H1 (cell line): ENCODE measurements at regions of chr6 and their contacts with region 1.

Region 1: DNA sequence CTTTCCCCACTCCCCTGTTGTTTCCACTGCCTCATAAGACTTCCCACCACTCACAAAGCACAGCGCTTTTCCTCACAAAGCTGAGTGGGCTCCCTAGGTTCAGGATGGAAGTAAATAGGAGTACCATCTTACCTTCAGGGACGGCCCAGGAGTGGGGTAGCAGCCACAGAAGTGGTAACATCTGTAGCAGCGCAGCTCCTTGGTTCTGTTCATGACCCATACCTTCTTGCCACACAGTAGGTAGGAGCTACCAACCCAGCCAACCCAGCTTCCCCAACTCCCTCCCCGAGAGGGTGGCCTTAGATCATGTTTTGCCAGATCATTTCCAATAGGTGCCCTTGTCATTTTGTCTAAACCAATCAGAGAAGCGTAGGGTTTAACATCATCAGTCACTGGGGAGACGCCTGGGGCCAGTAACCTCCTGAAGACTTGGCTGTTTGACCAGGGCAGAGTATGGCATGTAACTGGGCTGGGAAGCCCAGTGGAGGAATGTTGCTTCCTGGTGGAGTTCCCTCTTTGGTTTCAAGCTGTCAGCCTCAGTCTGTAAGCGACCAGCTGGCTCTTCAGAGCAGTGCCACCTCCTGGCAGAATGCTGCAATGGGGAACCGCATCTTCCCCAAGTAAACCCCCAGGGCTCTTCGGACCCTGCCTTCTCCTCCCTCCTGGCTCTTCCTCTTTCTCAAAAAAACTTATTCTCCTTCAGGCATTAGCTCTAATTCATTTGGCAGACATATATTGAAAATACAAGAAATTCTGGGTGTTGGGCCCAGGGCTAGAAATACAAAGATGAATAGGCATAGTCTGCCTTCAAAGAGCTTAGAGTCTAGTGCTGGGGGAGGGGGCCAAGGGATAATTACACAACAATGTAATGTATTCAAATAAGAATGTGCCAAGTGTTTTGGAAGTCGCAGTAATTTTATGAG is at the start of gene HLA-DMA:
- DNase-seq: peak; percentile 82 to 88
- H3K4me3 ChIP-seq: no peak within 1 kb of the TSS
- H3K27ac ChIP-seq: no peak within 1 kb of the TSS
- H3K4me1 ChIP-seq: peaks cover 0 to 13% (median 3%) of the 10 kb centered on the region in 4 experiments; a peak in 5 of 7 replicates
- H3K27me3 ChIP-seq: no peaks in the 10 kb centered on the region; a peak in 1 of 7 replicates
- CTCF ChIP-seq: peak; percentile 81 to 93 (median 82)
- EP300 ChIP-seq: no peak
- POLR2A ChIP-seq: no peak
- RAD21 ChIP-seq: peak; percentile 38 to 59
- total RNA-seq, gene HLA-DMA: 13.3 and 15.1 TPM in 2 replicates

Region 2: GRCh38 chr6:32685603-32686002 is 267.5 kb before region 1 on chr6:
- CTCF ChIA-PET with region 1: no interaction called
- POLR2A ChIA-PET with region 1: no interaction called
- DNase-seq: no peak
- H3K4me3 ChIP-seq: no peak overlapping the region
- H3K27ac ChIP-seq: no peak overlapping the region
- H3K4me1 ChIP-seq: no peaks in the 10 kb centered on the region; a peak in 1 of 7 replicates
- H3K27me3 ChIP-seq: no peaks in the 10 kb centered on the region
- CTCF ChIP-seq: no peak
- EP300 ChIP-seq: no peak
- POLR2A ChIP-seq: no peak
- RAD21 ChIP-seq: no peak

Region 3: GRCh38 chr6:32843979-32844838 is 108.9 kb before region 1 on chr6 and contains the start of gene PSMB8:
- CTCF ChIA-PET with region 1: interaction called, 28 read pairs
- POLR2A ChIA-PET with region 1: no interaction called
- DNase-seq: peak; percentile 88 to 95
- H3K4me3 ChIP-seq: peak within 1 kb of the TSS; percentile 59 to 93 (median 88)
- H3K27ac ChIP-seq: no peak within 1 kb of the TSS
- H3K4me1 ChIP-seq: peaks cover 0 to 3% (median 0%) of the 10 kb centered on the region in 4 experiments; a peak in 2 of 7 replicates
- H3K27me3 ChIP-seq: peaks cover 0 to 11% (median 10%) of the 10 kb centered on the region in 4 experiments; a peak in 4 of 7 replicates
- CTCF ChIP-seq: peak in 1 of 3 experiments; percentile 8; a peak in 1 of 4 replicates
- EP300 ChIP-seq: no peak
- POLR2A ChIP-seq: peak in 1 of 2 experiments; percentile 75; a peak in 2 of 3 replicates
- RAD21 ChIP-seq: no peak
- total RNA-seq, gene PSMB8: 18.4 and 22.0 TPM in 2 replicates

Region 4: DNA sequence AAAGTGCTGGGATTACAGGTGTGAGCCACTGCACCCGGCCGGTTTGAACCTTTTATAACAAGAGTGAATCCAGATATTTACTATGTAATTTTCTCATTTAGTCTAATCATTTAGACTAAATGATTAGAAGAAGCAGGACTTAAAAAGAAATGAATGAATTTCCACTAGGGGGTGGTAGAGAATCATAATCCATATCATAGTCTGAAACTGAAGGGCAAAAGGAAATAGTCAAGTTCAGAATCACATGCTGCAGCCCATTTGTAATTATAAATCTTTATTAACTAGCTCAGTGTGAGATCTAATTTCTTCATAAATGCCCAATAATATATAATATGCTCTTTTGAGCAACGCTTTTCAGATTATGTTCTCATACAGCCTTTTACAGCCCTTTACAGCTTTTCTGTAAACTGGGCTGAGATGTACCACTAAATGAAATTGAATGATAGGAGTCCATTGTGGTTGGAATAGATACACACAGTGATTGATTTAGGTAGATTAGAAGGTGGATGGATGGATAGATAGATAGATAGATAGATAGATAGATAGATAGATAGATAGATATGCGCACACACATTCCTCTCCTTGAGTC is 67.3 kb before region 1 on chr6:
- CTCF ChIA-PET with region 1: interaction called, 15 read pairs
- POLR2A ChIA-PET with region 1: interaction called, 4 read pairs
- DNase-seq: no peak
- H3K4me3 ChIP-seq: no peak overlapping the region
- H3K27ac ChIP-seq: no peak overlapping the region
- H3K4me1 ChIP-seq: no peaks in the 10 kb centered on the region
- H3K27me3 ChIP-seq: no peaks in the 10 kb centered on the region
- CTCF ChIP-seq: peak in 2 of 3 experiments; percentile 25 to 38; a peak in 2 of 4 replicates
- EP300 ChIP-seq: no peak
- POLR2A ChIP-seq: no peak
- RAD21 ChIP-seq: peak; percentile 63 to 67

Region 5: GRCh38 chr6:32894080-32895005 is 58.7 kb before region 1 on chr6:
- CTCF ChIA-PET with region 1: interaction called, 16 read pairs
- POLR2A ChIA-PET with region 1: interaction called, 10 read pairs
- DNase-seq: peak; percentile 84 to 99
- H3K4me3 ChIP-seq: peak overlapping the region; percentile 74 to 92 (median 84)
- H3K27ac ChIP-seq: peak overlapping the region; percentile 39; the same call in 1 of the 2 replicates
- H3K4me1 ChIP-seq: peaks cover 0 to 4% (median 1%) of the 10 kb centered on the region in 4 experiments; a peak in 2 of 7 replicates
- H3K27me3 ChIP-seq: no peaks in the 10 kb centered on the region; a peak in 1 of 7 replicates
- CTCF ChIP-seq: no peak
- EP300 ChIP-seq: no peak
- POLR2A ChIP-seq: peak in 1 of 2 experiments; percentile 69; a peak in 2 of 3 replicates
- RAD21 ChIP-seq: no peak

Region 6: DNA sequence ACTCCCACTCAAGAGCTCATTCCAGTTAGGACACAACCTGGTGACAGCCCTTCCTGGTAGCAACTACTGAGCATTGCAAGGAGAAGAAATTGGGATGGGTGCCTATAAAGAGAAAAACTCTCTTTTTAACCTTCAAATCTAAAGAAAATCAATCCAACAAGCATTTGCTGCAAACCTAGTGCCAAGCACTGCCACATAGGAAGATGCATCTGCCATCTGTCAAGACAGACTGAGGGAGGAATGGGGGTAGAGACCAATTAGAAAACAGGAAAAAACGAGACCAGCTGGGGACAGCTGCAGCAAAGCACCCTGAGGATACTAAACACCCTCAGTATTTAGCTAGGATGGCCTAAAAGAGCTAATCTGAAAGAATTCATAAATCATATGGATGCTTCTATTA is 40.1 kb before region 1 on chr6:
- CTCF ChIA-PET with region 1: interaction called, 14 read pairs
- POLR2A ChIA-PET with region 1: no interaction called
- DNase-seq: no peak
- H3K4me3 ChIP-seq: no peak overlapping the region
- H3K27ac ChIP-seq: no peak overlapping the region
- H3K4me1 ChIP-seq: no peaks in the 10 kb centered on the region
- H3K27me3 ChIP-seq: peaks cover 0 to 1% (median 0%) of the 10 kb centered on the region in 4 experiments; a peak in 1 of 7 replicates
- CTCF ChIP-seq: no peak
- EP300 ChIP-seq: no peak
- POLR2A ChIP-seq: no peak
- RAD21 ChIP-seq: no peak

Region 7: GRCh38 chr6:32940656-32941213 is 12.3 kb before region 1 on chr6 and contains the start of gene HLA-DMB:
- CTCF ChIA-PET with region 1: interaction called, 160 read pairs
- POLR2A ChIA-PET with region 1: interaction called, 16 read pairs
- DNase-seq: peak in 1 of 2 experiments; percentile 62
- H3K4me3 ChIP-seq: peak within 1 kb of the TSS; percentile 6 to 49 (median 26); a peak in 6 of 8 replicates
- H3K27ac ChIP-seq: no peak within 1 kb of the TSS
- H3K4me1 ChIP-seq: peaks cover 0 to 6% (median 1%) of the 10 kb centered on the region in 4 experiments; a peak in 4 of 7 replicates
- H3K27me3 ChIP-seq: no peaks in the 10 kb centered on the region
- CTCF ChIP-seq: no peak
- EP300 ChIP-seq: no peak
- POLR2A ChIP-seq: no peak
- RAD21 ChIP-seq: no peak
- total RNA-seq, gene HLA-DMB: 1.3 and 2.7 TPM in 2 replicates